ENCODE measurements at regions of chrX and their contacts with region 1.

Region 1: DNA sequence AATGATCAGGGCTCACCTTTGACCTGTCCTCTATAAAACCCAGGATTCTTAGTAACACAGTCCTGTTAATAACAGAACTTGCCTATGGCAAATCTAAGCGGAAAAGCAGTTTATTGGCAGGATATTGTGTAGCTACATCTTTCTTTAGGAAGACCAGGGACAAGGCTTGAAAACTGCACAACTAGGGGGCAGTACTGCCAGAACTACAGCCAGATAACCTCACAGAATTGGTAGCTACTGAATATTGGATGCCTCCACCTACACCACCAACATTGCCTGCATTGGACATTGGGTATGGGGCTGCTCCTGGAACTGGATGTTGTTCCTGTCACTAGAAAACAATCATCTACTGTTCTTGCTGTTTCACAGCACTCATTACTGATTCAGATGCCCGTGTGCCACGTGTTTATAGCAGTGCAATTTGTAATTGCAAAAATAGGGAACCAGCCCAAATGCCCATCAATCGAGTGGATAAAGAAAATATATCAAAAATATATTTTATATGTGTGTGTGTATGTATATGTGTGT is 47.4 kb downstream of the REPS2 start:
- DNase-seq: no peak
- ATAC-seq: peak; percentile 36; the same call in 1 of the 2 replicates
- H3K4me3 Mint-ChIP-seq: no peak overlapping the region
- H3K27ac Mint-ChIP-seq: no peak overlapping the region
- H3K4me1 Mint-ChIP-seq: no peaks in the 10 kb centered on the region
- H3K27me3 Mint-ChIP-seq: no peaks in the 10 kb centered on the region
- CTCF ChIP-seq: no peak

Region 2: DNA sequence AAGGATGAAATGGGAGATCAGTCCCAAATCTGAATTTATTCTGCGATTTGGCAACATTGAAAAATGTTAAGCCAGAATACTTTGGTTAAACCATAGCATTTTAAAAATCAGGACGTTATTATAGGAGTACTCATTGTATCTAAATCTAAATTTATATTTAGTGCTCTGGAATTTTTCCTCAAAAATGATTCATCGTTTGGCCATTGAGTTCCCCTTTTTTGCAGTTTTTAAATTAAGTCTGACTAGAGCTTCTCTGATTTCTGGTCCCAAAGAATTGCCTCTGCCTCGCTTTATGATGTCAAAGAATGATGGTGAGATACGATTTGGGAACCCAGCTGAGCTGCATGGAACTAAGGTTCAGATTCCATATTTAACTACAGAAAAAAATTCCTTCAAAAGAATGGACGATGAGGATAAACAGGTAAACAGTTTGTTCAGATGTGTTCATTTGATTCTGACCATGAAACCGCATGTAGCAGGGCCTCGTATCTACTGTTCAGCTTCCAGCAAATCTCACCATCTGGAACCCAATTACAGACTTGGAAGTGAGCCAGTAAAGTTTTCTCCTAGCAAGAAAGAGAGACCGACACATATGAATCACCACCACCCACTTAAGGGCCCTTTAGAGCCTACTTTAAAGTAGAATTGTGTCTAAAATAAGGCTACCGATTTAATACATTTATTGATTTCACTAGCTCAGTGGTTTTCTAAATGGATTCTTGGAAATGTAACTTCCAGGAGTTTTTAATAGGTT is 28.2 kb after region 1 on chrX:
- CTCF ChIA-PET with region 1: interaction called, 11 read pairs
- POLR2A ChIA-PET with region 1: no interaction called
- DNase-seq: no peak
- ATAC-seq: no peak
- H3K4me3 Mint-ChIP-seq: no peak overlapping the region
- H3K27ac Mint-ChIP-seq: no peak overlapping the region
- H3K4me1 Mint-ChIP-seq: peaks cover 4% of the 10 kb centered on the region; the same call in 1 of the 2 replicates
- H3K27me3 Mint-ChIP-seq: no peaks in the 10 kb centered on the region
- CTCF ChIP-seq: no peak

Region 3: GRCh38 chrX:17292132-17292527 is 298.3 kb after region 1 on chrX:
- CTCF ChIA-PET with region 1: no interaction called
- POLR2A ChIA-PET with region 1: no interaction called
- DNase-seq: no peak
- ATAC-seq: peak; percentile 67
- H3K4me3 Mint-ChIP-seq: no peak overlapping the region
- H3K27ac Mint-ChIP-seq: peak overlapping the region; percentile 54
- H3K4me1 Mint-ChIP-seq: peaks cover 17% of the 10 kb centered on the region
- H3K27me3 Mint-ChIP-seq: no peaks in the 10 kb centered on the region
- CTCF ChIP-seq: no peak